H1 (cell line): ENCODE measurements at regions of chr18 and their contacts with region 1.

Region 1: DNA sequence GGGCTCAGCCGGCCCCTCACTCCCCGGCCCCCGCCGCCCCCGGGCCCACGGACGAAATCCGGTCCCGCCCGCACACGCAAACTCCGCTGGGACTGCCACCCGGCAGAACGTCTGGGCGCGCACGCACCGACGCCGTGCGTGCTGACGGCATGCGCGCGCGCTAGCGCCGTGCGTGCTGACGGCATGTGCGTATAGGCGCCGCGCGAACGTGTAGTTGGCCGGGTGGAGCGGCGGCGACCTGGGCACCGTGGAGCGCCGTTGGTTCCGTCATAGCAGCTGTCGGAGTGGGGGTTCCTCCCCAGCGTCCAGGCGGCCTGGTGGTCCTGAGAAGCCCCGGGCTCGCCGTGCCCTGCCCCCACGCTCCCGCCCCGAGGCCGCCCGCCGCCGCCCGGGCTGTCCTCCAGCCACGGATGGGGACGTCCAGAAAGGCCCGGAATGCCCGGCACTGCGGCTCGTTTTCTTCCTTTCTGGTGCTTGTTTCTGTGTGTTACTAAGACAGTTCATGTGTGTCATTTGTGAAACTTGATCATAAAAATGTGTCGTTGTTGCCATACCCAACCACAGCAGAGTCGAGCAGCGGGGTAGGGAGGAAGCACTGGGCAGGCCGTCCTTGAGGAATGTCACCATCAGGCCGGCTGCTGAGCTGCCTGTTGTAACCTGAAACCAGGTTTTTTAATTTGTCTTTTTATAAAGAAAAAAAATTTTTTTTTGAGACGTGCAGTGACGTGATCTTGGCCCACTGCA is at the start of gene TXNL4A:
- DNase-seq: peak in 1 of 2 experiments; percentile 86
- H3K4me3 ChIP-seq: peak within 1 kb of the TSS; percentile 64 to 94 (median 86)
- H3K27ac ChIP-seq: peak within 1 kb of the TSS; percentile 87
- H3K4me1 ChIP-seq: peaks cover 0 to 5% (median 2%) of the 10 kb centered on the region in 4 experiments; a peak in 2 of 7 replicates
- H3K27me3 ChIP-seq: no peaks in the 10 kb centered on the region
- CTCF ChIP-seq: no peak
- EP300 ChIP-seq: no peak
- POLR2A ChIP-seq: peak; percentile 50 to 90
- RAD21 ChIP-seq: no peak
- total RNA-seq, gene TXNL4A: 160 and 169 TPM in 2 replicates

Region 2: GRCh38 chr18:79951578-79952455 is 36.8 kb before region 1 on chr18 and contains the start of gene SLC66A2:
- CTCF ChIA-PET with region 1: interaction called, 11 read pairs
- POLR2A ChIA-PET with region 1: interaction called, 3 read pairs
- DNase-seq: peak in 1 of 2 experiments; percentile 99
- H3K4me3 ChIP-seq: peak within 1 kb of the TSS; percentile 57 to 84 (median 66)
- H3K27ac ChIP-seq: no peak within 1 kb of the TSS
- H3K4me1 ChIP-seq: peaks cover 2 to 9% (median 5%) of the 10 kb centered on the region in 4 experiments
- H3K27me3 ChIP-seq: peaks cover 10 to 44% (median 39%) of the 10 kb centered on the region in 4 experiments
- CTCF ChIP-seq: 0 out of 4 replicates have a peak, but pooled peaks of 1 of the 3 experiments have one; percentile 4
- EP300 ChIP-seq: no peak
- POLR2A ChIP-seq: no peak
- RAD21 ChIP-seq: no peak
- total RNA-seq, gene SLC66A2: 11.6 and 15.0 TPM in 2 replicates

Region 3: GRCh38 chr18:79964330-79965118 is 24.1 kb before region 1 on chr18 and contains the start of gene HSBP1L1:
- CTCF ChIA-PET with region 1: interaction called, 9 read pairs
- POLR2A ChIA-PET with region 1: interaction called, 18 read pairs
- DNase-seq: peak in 1 of 2 experiments; percentile 84
- H3K4me3 ChIP-seq: peak within 1 kb of the TSS; percentile 33 to 64 (median 35)
- H3K27ac ChIP-seq: no peak within 1 kb of the TSS
- H3K4me1 ChIP-seq: peaks cover 2 to 21% (median 19%) of the 10 kb centered on the region in 4 experiments; a peak in 6 of 7 replicates
- H3K27me3 ChIP-seq: peaks cover 3 to 47% (median 40%) of the 10 kb centered on the region in 4 experiments
- CTCF ChIP-seq: peak; percentile 26 to 40 (median 33)
- EP300 ChIP-seq: no peak
- POLR2A ChIP-seq: no peak
- RAD21 ChIP-seq: peak; percentile 2 to 31; a peak in 3 of 4 replicates
- total RNA-seq, gene HSBP1L1: 0.69 and 1.0 TPM in 2 replicates

Region 4: DNA sequence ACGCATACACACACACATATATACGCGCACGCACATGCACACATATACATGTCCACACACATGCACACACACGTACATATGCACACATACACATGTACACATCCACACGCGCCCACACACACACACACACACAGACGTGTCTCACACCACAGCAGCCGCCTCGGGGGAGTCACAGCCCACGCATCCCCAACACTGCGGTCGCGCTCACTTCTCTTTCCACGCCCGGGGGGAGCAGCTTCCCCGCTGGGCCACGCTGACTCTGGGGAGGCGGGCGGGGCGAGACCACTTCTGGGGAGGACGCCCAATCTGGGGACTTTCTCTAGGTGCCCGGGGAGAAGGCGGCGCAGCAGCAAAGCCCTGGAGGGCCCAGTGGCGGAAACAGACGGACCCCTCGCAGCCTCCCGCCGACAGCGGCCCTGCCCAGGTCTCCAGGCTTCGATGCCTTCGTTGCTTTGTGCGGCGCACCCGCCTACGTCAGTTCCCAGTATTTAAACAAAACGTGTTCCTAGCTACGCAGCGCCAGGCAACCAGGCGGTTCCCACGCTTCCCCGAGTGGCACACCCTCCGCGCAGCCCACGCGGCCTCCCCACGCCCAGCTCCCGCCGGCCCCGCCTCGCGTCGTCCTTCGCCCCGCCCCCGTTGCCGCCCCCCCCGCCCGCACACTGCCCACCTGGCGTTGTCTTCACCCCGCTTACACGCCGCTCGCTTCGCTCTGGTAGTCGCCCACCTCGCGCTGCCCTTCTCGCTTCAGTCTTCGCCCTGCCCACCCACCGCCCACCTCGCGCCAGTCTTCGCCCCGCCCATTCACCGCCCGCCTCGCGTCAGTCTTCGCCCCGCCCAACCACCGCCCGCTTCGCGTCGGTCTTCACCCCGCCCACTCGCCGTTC is 44.8 kb after region 1 on chr18:
- CTCF ChIA-PET with region 1: interaction called, 3 read pairs
- POLR2A ChIA-PET with region 1: interaction called, 11 read pairs
- DNase-seq: peak; percentile 9 to 79
- H3K4me3 ChIP-seq: peak overlapping the region; percentile 66 to 73 (median 71)
- H3K27ac ChIP-seq: no peak overlapping the region; the same call in 1 of the 2 replicates
- H3K4me1 ChIP-seq: peaks cover 0 to 10% (median 5%) of the 10 kb centered on the region in 4 experiments; a peak in 5 of 7 replicates
- H3K27me3 ChIP-seq: no peaks in the 10 kb centered on the region
- CTCF ChIP-seq: no peak
- EP300 ChIP-seq: no peak
- POLR2A ChIP-seq: peak; percentile 11 to 59
- RAD21 ChIP-seq: no peak